Naive thymus-derived CD4-positive, alpha-beta T cell (primary cell): ENCODE measurements at regions of chr11 and their contacts with region 1.

Region 1: DNA sequence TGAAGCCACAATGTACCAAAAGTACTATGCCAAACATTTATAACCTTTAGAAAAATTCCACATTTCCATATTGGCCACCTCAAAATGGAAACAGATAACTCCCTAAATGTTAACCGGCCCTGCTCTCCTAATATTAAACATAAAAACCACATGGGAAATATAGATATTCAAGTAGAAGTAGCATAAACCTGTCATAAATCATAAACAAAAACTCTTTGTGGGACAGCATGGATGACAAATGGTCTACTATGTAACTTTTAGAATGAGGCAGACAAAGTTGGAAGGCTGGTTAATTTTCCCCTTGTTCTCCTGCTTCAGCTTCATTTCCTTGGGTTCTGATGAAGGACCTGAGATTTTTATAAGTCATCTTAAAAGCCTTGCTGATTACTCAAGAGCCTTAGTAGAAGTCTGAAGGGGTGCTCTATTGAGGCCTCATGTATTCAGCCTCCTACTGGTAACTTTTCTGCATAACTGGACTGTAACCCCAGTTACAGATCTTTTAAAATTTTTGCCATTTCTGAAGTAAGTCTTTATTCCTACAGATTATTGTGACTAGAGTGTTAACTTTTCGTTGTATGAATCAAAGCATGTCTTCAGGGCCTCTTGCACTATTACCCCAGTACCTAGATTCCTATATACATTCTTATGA is 116.4 kb downstream of the STIM1 start:
- DNase-seq: no peak
- ATAC-seq: peak; percentile 41
- H3K4me3 ChIP-seq: no peak overlapping the region
- H3K4me3 Mint-ChIP-seq: peak overlapping the region in 1 of 10 donors; percentile 5
- H3K27ac ChIP-seq: no peak overlapping the region
- H3K27ac Mint-ChIP-seq: peak overlapping the region in 6 of 9 donors; percentile 39 to 88 (median 53)
- H3K4me1 ChIP-seq: peaks cover 10 to 28% of the 10 kb centered on the region in 2 donors
- H3K4me1 Mint-ChIP-seq: peaks cover 35 to 89% (median 81%) of the 10 kb centered on the region in 7 donors
- H3K27me3 ChIP-seq: no peaks in the 10 kb centered on the region
- H3K27me3 Mint-ChIP-seq: no peaks in the 10 kb centered on the region

Region 2: DNA sequence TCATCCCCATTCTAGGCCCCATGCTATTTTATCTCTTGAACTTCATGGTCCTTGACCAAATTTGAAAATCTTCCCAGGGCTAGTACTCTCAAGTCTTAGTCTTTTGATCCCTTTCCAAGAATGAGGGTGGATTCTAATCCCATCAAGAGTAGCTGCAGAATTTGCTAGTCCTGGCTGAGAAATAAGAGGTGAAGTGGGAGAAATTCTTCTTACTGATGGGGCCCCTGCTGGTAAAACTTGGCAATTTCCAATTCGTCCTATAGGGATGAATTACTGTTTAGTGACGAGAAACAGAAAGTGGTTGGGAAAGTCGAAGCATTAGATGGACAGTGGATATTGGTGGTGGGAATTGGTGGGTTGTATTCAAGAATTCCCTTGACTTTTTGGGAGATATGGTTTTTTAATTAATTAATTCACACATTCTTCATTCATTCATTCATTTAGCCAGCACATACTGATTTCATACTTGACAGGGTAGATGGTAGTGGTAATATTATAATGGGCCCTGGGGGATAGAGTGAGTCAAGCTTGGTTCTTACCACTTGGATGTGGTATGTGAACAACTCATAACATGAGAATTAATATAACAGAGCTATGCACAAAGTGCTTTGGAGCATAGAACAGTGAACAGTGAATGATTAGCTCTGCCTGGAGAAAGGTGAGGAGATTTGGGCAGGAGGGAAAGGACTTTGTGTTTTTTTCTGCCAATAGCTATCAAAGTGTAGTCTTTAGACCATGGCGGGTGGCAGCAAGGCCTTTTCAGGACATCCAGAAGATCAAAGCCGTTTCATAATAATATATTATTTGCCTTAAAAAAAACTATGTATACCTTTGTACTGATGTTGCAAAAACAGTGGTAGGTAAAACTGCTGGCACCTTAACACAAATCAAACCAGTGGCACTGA is 12.6 kb before region 1 on chr11:
- CTCF ChIA-PET with region 1: interaction called, 5 read pairs
- POLR2A ChIA-PET with region 1: interaction called, 3 read pairs
- intact Hi-C with region 1: loop called in 1 of 2 experiments (anchors 2 kb)
- DNase-seq: no peak
- ATAC-seq: no peak
- H3K4me3 ChIP-seq: no peak overlapping the region
- H3K4me3 Mint-ChIP-seq: peak overlapping the region in 5 of 10 donors; percentile 7 to 34 (median 26)
- H3K27ac ChIP-seq: no peak overlapping the region
- H3K27ac Mint-ChIP-seq: peak overlapping the region in 4 of 9 donors; percentile 19 to 63 (median 52)
- H3K4me1 ChIP-seq: peaks cover 14 to 35% of the 10 kb centered on the region in 2 donors
- H3K4me1 Mint-ChIP-seq: peaks cover 58 to 93% (median 90%) of the 10 kb centered on the region in 7 donors
- H3K27me3 ChIP-seq: no peaks in the 10 kb centered on the region
- H3K27me3 Mint-ChIP-seq: no peaks in the 10 kb centered on the region